ENCODE measurements at regions of chr4 and their contacts with region 1.

Region 1: GRCh38 chr4:17552427-17552826 is 24.6 kb upstream of the LAP3 start:
- DNase-seq: no peak
- H3K4me3 ChIP-seq: no peak overlapping the region
- H3K27ac ChIP-seq: no peak overlapping the region
- H3K4me1 ChIP-seq: peaks cover 0 to 5% (median 0%) of the 10 kb centered on the region in 3 donors
- H3K27me3 ChIP-seq: peaks cover 0 to 19% (median 0%) of the 10 kb centered on the region in 4 donors
- CTCF ChIP-seq: no peak
- POLR2A ChIP-seq: no peak

Region 2: DNA sequence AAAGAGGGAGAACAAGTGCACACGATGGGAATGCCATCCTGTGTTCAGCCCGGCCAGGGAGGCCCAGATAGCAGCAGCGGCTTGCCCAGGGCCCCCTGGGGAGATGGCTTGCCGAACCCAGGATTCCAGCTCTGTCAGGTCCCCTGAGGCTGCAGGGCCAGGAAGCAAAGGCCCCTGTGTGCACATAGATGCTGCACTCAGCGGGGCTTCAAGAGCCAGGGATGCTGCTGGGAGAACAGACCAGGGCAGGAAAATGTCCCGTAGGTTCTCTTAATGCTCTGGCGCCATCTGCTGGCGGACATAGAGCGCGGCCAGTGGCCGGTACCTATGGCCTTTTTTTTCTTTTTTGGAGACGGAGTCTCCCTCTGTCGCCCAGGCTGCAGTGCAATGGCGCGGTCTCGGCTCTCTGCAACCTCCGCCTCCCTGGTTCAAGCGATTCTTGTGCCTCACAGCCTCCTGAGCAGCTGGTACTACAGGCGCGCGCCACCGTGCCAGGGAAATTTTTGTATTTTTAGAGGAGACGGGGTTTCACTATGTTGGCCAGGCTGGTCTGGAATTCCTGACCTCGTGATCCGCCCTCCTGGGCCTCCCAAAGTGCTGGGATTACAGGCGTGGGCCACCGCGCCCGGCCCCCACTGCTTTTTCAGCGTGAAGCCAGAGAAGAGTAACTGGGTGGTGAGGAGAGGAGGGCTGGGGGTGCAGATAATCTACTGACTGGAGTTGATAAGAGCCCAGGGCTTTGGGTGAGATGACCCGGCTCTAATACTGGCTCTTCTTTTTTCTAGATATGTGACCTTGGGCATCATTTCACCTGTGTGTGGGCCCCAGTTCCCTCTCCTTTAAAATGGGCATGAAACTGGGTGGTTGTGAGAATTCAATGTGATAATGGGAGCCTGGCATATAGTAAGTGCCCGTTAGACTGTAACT is 84.5 kb after region 1 on chr4:
- intact Hi-C with region 1: loop called (anchors 5 kb)
- DNase-seq: no peak
- H3K4me3 ChIP-seq: no peak overlapping the region
- H3K27ac ChIP-seq: no peak overlapping the region
- H3K4me1 ChIP-seq: peaks cover 0 to 6% (median 0%) of the 10 kb centered on the region in 3 donors
- H3K27me3 ChIP-seq: peaks cover 0 to 3% (median 0%) of the 10 kb centered on the region in 4 donors
- CTCF ChIP-seq: peak; percentile 72 to 88 (median 83)
- POLR2A ChIP-seq: no peak